Head of caudate nucleus (tissue), 42 donors: ENCODE measurements at regions of chr18 and their contacts with region 1.

Region 1: DNA sequence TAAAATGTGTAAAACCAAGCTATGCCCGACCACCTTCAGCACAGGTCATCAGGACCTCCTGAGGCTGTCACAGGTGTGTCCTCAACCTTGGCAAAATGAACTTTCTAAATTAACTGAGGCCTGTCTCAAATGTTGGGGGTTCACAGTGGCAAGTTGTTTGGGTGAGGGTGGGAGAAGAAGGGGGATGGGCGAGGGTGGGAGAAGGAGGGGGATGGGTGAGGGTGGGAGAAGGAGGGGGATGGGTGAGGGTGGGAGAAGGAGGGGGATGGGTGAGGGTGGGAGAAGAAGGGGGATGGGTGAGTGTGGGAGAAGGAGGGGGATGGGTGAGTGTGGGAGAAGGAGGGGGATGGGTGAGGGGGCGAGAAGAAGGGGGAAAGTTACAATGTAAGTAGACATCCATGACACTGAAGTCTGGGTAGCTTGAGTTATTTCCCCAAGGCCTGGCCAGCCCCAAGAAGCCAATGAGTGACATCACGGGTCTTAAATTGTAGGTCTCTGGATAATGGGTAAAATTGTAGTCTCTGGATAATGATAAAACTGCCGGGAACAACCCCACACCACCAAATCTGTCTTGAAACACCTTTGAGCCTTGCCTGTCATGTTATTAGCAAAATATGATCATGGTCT is 56.3 kb downstream of the TIMM21 start:
- DNase-seq: peak in 1 of 42 donors; percentile 5

Region 2: GRCh38 chr18:74331404-74331803 is 126.8 kb after region 1 on chr18:
- intact Hi-C with region 1: loop called (anchors 5 kb)
- DNase-seq: peak in 2 of 42 donors; percentile 2 to 5